ENCODE measurements at regions of chr11 and their contacts with region 1.

Region 1: GRCh38 chr11:35785287-35786167 is 123.0 kb downstream of the TRIM44 start:
- DNase-seq: no peak
- H3K4me3 ChIP-seq: no peak overlapping the region
- H3K27ac ChIP-seq: peak overlapping the region in 12 of 59 donors; percentile 2 to 58 (median 24)
- H3K27me3 ChIP-seq: no peaks in the 10 kb centered on the region
- CTCF ChIP-seq: no peak

Region 2: DNA sequence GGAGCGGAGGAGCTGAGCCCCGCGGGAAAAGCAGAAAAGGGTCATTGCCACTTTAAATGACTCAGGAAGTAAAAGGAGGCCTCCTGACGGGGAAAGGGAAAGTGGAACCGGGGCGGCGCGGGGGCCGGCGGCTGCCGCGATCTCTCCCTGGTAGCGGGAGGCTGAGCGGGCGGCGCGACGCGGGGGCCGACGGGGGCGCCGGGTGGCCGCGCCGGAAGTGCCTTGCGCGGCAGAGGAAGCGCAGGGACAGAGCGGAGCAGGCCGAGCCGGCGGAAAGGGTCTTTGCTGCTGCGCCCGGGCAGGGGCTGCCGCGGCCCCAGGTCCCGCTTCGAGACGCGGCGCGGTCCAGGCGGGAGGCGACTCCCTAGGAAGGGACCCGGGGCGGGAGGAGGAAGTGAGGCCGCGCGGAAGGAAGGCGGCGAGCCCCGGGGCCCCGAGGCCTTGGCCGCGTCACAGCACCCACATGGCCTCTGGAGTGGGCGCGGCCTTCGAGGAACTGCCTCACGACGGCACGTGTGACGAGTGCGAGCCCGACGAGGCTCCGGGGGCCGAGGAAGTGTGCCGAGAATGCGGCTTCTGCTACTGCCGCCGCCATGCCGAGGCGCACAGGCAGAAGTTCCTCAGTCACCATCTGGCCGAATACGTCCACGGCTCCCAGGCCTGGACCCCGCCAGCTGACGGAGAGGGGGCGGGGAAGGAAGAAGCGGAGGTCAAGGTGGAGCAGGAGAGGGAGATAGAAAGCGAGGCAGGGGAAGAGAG is 122.7 kb before region 1 on chr11 and contains the start of gene TRIM44:
- intact Hi-C with region 1: loop called in 1 of 2 experiments (anchors 10 kb)
- DNase-seq: peak; percentile 70 to 90 (median 84)
- H3K4me3 ChIP-seq: peak within 1 kb of the TSS; percentile 64 to 96 (median 86)
- H3K27ac ChIP-seq: peak within 1 kb of the TSS; percentile 79 to 99 (median 93)
- H3K27me3 ChIP-seq: no peaks in the 10 kb centered on the region
- CTCF ChIP-seq: peak in 16 of 56 donors; percentile 1 to 41 (median 16)
- total RNA-seq, gene TRIM44: 74.7 to 169 (median 126) TPM

Region 3: GRCh38 chr11:35752115-35752514 is 33.4 kb before region 1 on chr11:
- intact Hi-C with region 1: no loop called
- DNase-seq: no peak
- H3K4me3 ChIP-seq: no peak overlapping the region
- H3K27ac ChIP-seq: no peak overlapping the region
- H3K27me3 ChIP-seq: no peaks in the 10 kb centered on the region
- CTCF ChIP-seq: no peak

Region 4: GRCh38 chr11:35919244-35919643 is 133.7 kb after region 1 on chr11:
- intact Hi-C with region 1: no loop called
- DNase-seq: peak in 1 of 10 donors; percentile 14
- H3K4me3 ChIP-seq: peak overlapping the region in 30 of 59 donors; percentile 1 to 54 (median 23)
- H3K27ac ChIP-seq: peak overlapping the region in 53 of 59 donors; percentile 1 to 96 (median 70)
- H3K27me3 ChIP-seq: no peaks in the 10 kb centered on the region
- CTCF ChIP-seq: peak in 1 of 56 donors; percentile 9